ENCODE measurements at regions of chr21 and their contacts with region 1.

Region 1: DNA sequence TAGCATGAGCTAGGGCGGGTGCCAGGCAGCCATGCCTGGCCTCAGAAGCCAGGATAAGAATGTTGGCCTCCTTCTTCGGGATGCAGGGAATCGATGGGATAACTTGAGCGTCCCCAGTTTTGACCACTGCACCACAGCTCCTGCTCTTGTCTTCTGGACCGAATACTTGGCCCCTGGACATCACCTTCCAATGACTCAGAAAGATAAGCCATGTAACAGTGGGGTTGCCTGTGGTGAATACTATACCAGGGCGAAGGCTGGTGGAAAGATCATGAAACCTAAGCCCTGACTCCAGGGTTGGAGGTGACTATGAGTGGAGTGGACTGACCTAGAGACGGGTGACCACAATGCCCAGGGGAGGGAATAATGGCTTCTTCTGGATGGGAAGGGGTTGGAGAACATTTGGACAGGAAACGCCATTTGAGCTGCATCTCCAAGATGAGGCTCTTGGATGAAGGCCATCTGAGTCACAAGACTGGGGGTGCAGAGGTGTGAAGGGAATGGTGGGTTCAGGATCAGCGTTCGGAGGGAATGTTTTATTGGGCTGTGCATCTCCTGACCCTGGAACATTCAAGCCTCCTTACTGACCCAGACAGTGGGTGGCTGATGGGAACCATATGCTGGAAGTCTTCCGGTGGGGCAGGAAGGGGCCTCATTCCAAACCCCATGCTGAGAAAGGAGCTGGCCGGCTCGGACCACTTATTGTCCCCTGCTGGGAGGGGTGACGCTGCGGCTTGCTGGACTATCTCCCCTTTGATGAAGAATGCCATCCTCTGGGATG is 18.5 kb upstream of the KCNE2 start:
- DNase-seq: no peak

Region 2: GRCh38 chr21:33924079-33924765 is 421.1 kb before region 1 on chr21:
- intact Hi-C with region 1: loop called (anchors 5 kb)
- DNase-seq: peak; percentile 88 to 98 (median 94)

Region 3: DNA sequence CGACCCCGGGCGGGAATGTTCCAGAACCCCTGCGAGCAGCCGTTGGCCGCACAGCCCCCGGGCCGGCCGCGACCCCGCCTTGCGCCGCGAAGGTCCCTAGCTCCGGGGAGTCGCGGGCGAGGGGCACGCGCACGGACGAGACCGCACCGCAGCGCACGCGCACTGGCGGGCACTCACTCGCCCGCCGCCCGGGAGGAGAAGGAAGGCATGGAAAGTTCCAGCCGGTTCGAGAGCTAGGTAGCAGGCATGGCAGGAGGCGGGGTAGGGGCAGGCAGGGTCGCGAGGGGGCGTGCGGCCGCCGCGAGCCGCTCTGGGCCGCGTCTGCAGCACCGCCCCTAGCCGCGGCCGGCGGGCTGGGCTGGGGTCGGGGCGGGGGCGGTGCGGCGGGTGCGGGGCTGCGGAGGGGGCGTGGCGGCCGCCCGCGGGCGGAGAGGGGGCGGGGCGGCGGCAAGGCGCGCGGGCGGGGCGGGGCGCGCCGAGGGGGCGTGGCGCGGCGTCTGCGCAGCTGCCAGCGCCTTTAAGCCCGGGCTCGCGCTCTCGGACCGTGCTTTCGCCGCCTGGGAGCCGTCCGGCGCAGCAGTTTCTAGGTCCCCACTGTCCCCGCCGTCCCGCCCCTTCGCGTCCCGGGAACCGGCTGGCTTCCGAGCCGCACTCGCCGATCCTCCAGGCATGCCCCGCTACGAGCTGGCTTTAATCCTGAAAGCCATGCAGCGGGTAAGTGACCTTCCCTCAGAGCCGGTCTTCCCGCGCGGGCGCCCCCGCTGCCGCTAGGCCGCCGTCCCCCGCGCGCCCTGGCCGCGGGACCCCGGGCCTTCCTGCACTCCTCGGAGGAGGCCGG is 272.0 kb before region 1 on chr21 and contains the starts of genes MRPS6 and SLC5A3:
- intact Hi-C with region 1: loop called (anchors 5 kb)
- DNase-seq: peak; percentile 41 to 93 (median 82)